Esophagus squamous epithelium (tissue), 5 donors: ENCODE measurements at regions of chr1 and their contacts with region 1.

Region 1: GRCh38 chr1:24070821-24071393 is 41.0 kb downstream of the MYOM3 start:
- DNase-seq: no peak
- H3K4me3 ChIP-seq: peak overlapping the region in 1 of 4 donors; percentile 7
- H3K27ac ChIP-seq: no peak overlapping the region
- H3K4me1 ChIP-seq: peaks cover 0 to 17% (median 8%) of the 10 kb centered on the region in 3 donors
- H3K27me3 ChIP-seq: peaks cover 0 to 3% (median 0%) of the 10 kb centered on the region in 4 donors
- CTCF ChIP-seq: peak; percentile 84 to 95 (median 90)
- POLR2A ChIP-seq: no peak

Region 2: DNA sequence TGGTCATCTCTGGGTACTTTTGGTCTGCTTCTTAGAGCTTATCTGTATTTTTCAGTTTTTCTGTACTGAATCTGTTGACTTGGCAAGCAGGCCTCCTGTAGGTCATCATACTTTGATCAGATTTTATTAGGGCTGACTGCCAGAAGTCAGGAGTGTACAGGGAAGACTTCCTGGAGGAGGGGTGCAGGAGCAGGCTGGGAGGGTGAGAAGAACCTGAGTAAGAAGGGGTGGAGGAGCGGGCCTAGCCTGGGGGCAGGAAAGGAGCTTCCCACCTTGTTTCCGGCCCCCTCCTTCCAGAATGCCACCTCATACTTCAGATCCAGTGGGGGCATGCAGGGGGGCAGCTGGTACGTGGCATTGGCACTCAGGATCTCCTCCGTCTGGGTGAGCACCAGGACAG is 90.4 kb after region 1 on chr1:
- intact Hi-C with region 1: loop called (anchors 10 kb)
- DNase-seq: no peak
- H3K4me3 ChIP-seq: no peak overlapping the region
- H3K27ac ChIP-seq: no peak overlapping the region
- H3K4me1 ChIP-seq: no peaks in the 10 kb centered on the region
- H3K27me3 ChIP-seq: peaks cover 0 to 6% (median 0%) of the 10 kb centered on the region in 4 donors
- CTCF ChIP-seq: no peak
- POLR2A ChIP-seq: no peak